ENCODE measurements at regions of chr9 and their contacts with region 1.

Region 1: DNA sequence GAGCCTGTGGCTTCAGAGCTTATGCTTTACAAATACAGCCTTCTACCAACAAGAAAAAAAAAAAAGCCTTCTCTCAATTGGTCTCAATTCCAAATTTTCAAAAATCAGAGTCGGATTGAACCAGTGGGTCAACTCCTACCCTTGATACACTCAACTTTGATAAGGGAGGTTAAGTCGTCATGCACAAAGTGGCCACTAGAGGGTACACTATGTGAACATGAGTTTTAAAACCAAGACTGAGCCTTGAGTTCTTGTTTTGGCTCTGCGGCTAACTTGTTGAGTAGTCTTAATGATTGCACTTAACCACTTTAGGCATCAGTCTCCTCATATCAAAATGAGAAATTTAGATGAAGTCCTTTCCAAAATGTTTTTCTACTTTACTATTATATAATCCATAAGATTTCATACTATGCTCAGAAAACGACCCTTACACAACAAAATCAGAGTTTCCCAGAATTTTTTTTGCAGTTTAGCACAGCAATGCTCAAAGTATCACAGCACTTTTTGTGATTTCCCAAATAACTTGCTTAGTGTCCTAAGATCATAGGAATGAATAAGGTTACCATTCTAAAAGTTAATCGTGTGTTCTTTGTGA is 92.9 kb upstream of the MTAP start:
- DNase-seq: peak; percentile 63 to 84
- H3K4me3 ChIP-seq: no peak overlapping the region
- H3K4me1 ChIP-seq: peaks cover 9% of the 10 kb centered on the region
- H3K27me3 ChIP-seq: peaks cover 15% of the 10 kb centered on the region; the same call in 1 of the 2 replicates

Region 2: GRCh38 chr9:21381448-21382339 is 327.9 kb before region 1 on chr9:
- in situ Hi-C with region 1: no loop called
- DNase-seq: peak in 1 of 2 experiments; percentile 10
- H3K4me3 ChIP-seq: no peak overlapping the region
- H3K4me1 ChIP-seq: no peaks in the 10 kb centered on the region
- H3K27me3 ChIP-seq: peaks cover 20% of the 10 kb centered on the region

Region 3: GRCh38 chr9:21796768-21797167 is 87.2 kb after region 1 on chr9:
- in situ Hi-C with region 1: loop called (anchors 5 kb)
- DNase-seq: no peak
- H3K4me3 ChIP-seq: no peak overlapping the region
- H3K4me1 ChIP-seq: no peaks in the 10 kb centered on the region
- H3K27me3 ChIP-seq: peaks cover 63% of the 10 kb centered on the region